Activated CD4-positive, alpha-beta T cell treated with anti-CD3 and anti-CD28 coated beads for 36 hours (primary cell): ENCODE measurements at regions of chr16 and their contacts with region 1.

Region 1: DNA sequence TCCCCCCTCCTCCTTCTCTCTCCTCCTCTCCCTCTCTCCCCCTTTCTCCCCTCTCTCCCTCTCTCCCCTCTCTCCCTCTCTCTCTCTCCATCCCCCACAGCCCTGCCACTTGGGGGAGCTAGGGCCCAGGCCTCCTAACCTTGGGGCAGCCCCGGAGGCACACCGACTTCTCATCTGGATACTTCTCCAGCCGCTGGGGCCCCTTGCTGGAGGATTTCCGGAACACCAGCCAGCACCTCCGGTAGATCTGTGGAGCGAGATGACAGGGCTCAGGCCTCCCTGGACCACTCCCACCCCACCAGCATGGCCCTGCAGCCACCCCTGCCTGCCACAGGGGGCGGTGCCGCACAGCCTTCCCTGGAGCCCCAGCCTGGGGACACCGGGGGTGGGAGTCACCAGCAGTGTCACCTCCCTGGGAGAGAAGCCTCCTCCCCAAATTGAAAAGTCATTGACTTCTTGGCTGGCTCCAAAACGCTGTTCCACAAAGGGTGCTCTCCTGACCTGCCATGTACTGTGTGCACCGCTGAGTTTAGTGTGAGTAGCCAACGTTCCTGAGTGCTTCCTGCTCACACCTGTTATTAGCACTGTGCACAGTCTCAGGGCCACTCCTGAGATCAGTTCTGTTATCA is 10.5 kb downstream of the DOK4 start:
- DNase-seq: peak; percentile 95
- ATAC-seq: peak; percentile 98
- H3K4me3 Mint-ChIP-seq: no peak overlapping the region
- H3K27ac Mint-ChIP-seq: peak overlapping the region; percentile 63
- H3K4me1 Mint-ChIP-seq: peaks cover 19% of the 10 kb centered on the region
- H3K27me3 Mint-ChIP-seq: no peaks in the 10 kb centered on the region

Region 2: GRCh38 chr16:57462209-57462977 is 13.4 kb before region 1 on chr16 and contains the start of gene POLR2C:
- CTCF ChIA-PET with region 1: interaction called, 32 read pairs
- POLR2A ChIA-PET with region 1: no interaction called
- intact Hi-C with region 1: no loop called
- DNase-seq: peak; percentile 96
- ATAC-seq: peak; percentile 96
- H3K4me3 Mint-ChIP-seq: peak within 1 kb of the TSS; percentile 90
- H3K27ac Mint-ChIP-seq: peak within 1 kb of the TSS; percentile 99
- H3K4me1 Mint-ChIP-seq: peaks cover 24% of the 10 kb centered on the region
- H3K27me3 Mint-ChIP-seq: no peaks in the 10 kb centered on the region
- total RNA-seq, gene POLR2C: 54.3 to 57.1 TPM